Mammary epithelial cell (primary cell): ENCODE measurements at regions of chr17 and their contacts with region 1.

Region 1: GRCh38 chr17:34990921-34991365 is 10.6 kb downstream of the LIG3 start:
- DNase-seq: no peak
- H3K4me3 ChIP-seq: no peak overlapping the region
- H3K27ac ChIP-seq: no peak overlapping the region
- H3K4me1 ChIP-seq: no peaks in the 10 kb centered on the region
- H3K27me3 ChIP-seq: no peaks in the 10 kb centered on the region
- CTCF ChIP-seq: no peak

Region 2: DNA sequence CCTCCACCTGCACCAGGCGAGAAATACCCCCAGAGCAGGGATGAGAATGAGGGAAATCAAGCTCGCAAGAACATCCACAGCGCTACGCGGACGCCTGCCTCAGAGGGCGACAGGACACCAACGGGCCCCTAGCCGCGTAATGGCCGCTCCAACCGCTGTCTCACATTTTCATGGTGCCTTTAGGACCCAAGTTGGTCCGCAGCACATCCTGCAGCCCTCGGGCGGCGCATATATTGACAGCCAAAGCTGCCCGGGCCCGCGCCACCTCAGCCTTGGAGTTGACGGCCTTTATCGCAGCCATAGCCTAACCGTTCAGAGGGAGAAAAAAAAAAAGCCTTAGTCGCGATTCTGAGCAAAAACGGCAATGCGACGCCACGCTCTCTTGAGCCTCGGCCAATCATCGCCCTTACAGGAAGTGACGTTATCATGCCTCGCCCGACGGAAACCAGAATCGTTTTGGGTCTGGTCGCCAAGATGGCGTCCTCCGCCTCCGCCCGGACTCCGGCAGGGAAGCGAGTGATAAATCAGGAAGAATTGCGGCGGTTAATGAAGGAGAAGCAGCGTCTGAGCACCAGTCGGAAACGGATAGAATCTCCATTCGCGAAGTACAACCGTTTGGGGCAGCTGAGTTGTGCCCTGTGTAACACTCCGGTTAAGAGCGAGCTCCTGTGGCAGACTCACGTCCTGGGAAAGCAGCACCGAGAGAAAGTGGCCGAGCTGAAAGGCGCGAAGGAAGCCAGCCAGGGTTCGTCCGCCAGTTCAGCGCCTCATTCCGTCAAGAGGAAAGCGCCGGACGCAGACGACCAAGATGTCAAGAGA is 29.6 kb before region 1 on chr17 and contains the starts of genes CCT6B and ZNF830:
- CTCF ChIA-PET with region 1: no interaction called
- dilution Hi-C with region 1: loop called (anchors 5 kb)
- in situ Hi-C with region 1: no loop called
- intact Hi-C with region 1: no loop called
- DNase-seq: peak; percentile 90
- H3K4me3 ChIP-seq: peak within 1 kb of the TSS; percentile 78 to 92 (median 83)
- H3K27ac ChIP-seq: peak within 1 kb of the TSS; percentile 88
- H3K4me1 ChIP-seq: peaks cover 14% of the 10 kb centered on the region
- H3K27me3 ChIP-seq: no peaks in the 10 kb centered on the region
- CTCF ChIP-seq: no peak
- total RNA-seq, gene CCT6B: 3.0 to 3.6 TPM
- total RNA-seq, gene ZNF830: 6.5 to 12.6 TPM